Caco-2 (cell line): ENCODE measurements at regions of chr5 and their contacts with region 1.

Region 1: DNA sequence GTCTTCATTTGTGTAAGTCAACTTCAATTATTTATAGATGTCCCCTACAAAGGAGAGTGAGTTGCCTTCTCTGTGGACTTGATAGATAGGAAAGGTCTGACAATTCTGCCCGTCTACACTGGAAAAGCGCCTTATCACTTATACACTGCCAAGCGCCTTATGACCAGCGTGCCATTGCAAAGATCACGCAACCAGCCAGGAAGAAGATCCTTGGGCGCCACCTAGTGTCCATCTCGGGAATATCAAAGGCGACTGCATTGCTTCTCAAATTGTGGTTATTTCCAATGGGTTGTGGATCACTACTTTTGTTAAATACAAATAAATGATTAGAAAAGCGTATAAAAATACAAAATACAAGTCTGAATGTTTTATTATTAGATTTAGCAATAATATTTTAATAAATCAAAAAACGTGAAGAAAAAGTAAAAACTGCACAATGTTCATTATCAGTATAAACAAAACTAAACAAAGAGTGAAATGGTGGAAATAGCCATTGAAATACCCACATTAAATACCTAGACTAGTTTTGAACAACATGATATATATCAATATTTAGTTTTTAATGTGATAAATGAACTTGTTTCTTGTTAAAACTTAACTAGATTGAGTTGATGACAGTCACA is 27.8 kb downstream of the SUB1 start:
- DNase-seq: peak; percentile 76 to 85
- H3K4me3 ChIP-seq: no peak overlapping the region
- H3K4me3 Mint-ChIP-seq: no peak overlapping the region
- H3K27ac Mint-ChIP-seq: no peak overlapping the region
- H3K4me1 ChIP-seq: no peaks in the 10 kb centered on the region
- H3K4me1 Mint-ChIP-seq: no peaks in the 10 kb centered on the region
- H3K27me3 ChIP-seq: no peaks in the 10 kb centered on the region
- H3K27me3 Mint-ChIP-seq: no peaks in the 10 kb centered on the region
- CTCF ChIP-seq: peak; percentile 86 to 93

Region 2: DNA sequence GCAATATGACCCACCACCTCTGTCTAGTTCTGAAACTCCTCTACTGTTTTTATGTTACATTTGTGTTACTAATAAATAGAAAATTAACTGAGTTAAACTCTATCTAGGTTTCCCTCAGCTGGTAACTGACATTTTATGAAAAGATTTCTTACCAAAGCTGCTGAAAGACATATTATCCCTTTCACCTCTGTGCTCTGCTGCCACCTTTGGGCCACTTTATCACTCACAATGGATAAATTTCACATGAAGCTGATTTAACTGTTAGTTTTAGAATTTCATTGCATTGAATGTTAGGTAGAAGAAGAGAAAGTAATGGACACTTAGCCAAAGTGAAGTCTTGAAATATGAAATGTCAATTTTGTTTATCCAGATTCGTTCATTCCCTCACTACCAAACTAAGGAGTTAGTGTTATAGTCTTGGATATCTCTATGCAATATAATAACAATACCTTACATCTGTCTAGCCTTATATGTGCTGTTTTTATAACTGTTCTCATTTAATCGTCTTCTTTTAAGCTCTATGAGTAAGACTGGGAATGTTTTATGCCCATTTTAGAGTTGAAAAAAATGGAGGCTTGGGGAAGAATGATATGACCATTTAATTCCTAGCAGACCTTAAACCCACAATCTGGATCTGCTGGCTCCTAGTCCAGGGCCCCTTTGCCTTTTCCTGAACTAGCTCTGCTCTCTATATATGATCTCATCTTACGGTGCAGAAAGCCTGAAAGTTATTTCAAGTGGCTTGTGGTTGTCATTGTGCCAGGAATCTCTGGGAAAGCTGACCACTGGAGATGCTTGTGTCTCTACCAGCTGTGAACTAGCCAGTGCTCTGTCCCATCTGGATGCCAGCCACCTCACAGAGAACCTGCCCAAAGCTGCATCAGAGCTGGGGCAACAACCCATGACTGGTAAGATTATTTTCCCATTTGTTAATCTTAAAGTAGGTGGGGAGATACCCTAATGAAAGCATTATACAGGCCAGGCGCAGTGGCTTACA is 536.2 kb before region 1 on chr5:
- CTCF ChIA-PET with region 1: no interaction called
- POLR2A ChIA-PET with region 1: no interaction called
- intact Hi-C with region 1: loop called (anchors 10 kb)
- DNase-seq: peak in 1 of 2 experiments; percentile 49
- H3K4me3 ChIP-seq: no peak overlapping the region
- H3K4me3 Mint-ChIP-seq: no peak overlapping the region
- H3K27ac Mint-ChIP-seq: no peak overlapping the region
- H3K4me1 ChIP-seq: no peaks in the 10 kb centered on the region
- H3K4me1 Mint-ChIP-seq: no peaks in the 10 kb centered on the region
- H3K27me3 ChIP-seq: no peaks in the 10 kb centered on the region
- H3K27me3 Mint-ChIP-seq: no peaks in the 10 kb centered on the region
- CTCF ChIP-seq: peak; percentile 74 to 75

Region 3: DNA sequence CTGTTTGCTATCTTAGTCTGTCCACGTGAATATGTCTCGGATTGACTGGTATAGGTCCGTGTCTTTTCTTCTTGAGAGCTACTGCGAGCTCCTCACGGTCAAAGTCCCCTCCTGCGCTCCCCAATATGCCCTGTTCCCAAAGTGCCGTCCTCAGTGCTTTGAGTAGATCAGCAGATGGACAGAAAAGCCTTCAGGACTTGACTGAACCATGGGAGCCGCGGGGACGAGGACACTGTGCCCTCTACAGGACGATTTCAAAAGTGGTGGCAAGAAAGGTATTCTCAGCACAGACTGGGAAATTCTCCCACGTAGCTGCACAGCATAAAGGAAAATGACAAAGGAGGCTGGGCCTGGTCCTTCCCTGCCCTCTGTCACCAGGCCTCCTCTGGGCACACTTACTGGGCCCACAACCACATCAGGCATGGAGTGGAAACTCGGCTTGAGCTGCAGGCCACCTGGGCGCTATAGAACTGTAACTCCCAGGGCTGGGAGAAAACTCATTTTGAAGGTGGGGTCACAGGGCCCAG is 283.8 kb before region 1 on chr5:
- CTCF ChIA-PET with region 1: no interaction called
- POLR2A ChIA-PET with region 1: no interaction called
- intact Hi-C with region 1: loop called (anchors 5 kb)
- DNase-seq: peak; percentile 61 to 68
- H3K4me3 ChIP-seq: no peak overlapping the region
- H3K4me3 Mint-ChIP-seq: no peak overlapping the region
- H3K27ac Mint-ChIP-seq: no peak overlapping the region
- H3K4me1 ChIP-seq: peaks cover 10% of the 10 kb centered on the region; the same call in 1 of the 2 replicates
- H3K4me1 Mint-ChIP-seq: peaks cover 16% of the 10 kb centered on the region
- H3K27me3 ChIP-seq: no peaks in the 10 kb centered on the region
- H3K27me3 Mint-ChIP-seq: no peaks in the 10 kb centered on the region
- CTCF ChIP-seq: peak; percentile 63 to 67

Region 4: DNA sequence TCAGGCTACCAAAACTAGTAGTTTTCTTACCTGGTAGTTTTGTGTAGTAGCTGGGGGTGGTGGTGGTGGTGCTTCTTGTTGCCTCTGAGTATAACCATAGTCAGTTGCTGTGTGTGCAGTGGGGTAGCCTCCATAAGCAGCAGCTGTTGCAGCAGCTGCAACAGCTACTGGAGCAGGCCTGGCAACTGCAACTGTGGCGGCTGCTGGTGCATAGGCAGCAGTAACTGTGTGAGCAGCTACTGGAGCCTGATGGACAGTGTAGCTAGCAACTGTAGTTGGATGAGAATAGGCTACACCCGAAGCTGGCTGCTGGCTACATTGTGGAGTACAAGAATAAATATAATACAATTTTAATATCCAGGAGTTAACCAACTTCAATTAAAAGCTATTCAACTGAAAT is 193.4 kb before region 1 on chr5:
- CTCF ChIA-PET with region 1: no interaction called
- POLR2A ChIA-PET with region 1: no interaction called
- intact Hi-C with region 1: loop called (anchors 1 kb)
- DNase-seq: no peak
- H3K4me3 ChIP-seq: no peak overlapping the region
- H3K4me3 Mint-ChIP-seq: no peak overlapping the region
- H3K27ac Mint-ChIP-seq: no peak overlapping the region
- H3K4me1 ChIP-seq: no peaks in the 10 kb centered on the region
- H3K4me1 Mint-ChIP-seq: peaks cover 11% of the 10 kb centered on the region
- H3K27me3 ChIP-seq: no peaks in the 10 kb centered on the region
- H3K27me3 Mint-ChIP-seq: no peaks in the 10 kb centered on the region
- CTCF ChIP-seq: no peak

Region 5: GRCh38 chr5:32489791-32490582 is 123.2 kb before region 1 on chr5:
- CTCF ChIA-PET with region 1: interaction called, 8 read pairs
- POLR2A ChIA-PET with region 1: no interaction called
- intact Hi-C with region 1: loop called (anchors 1 kb)
- DNase-seq: peak; percentile 72 to 78
- H3K4me3 ChIP-seq: no peak overlapping the region
- H3K4me3 Mint-ChIP-seq: no peak overlapping the region
- H3K27ac Mint-ChIP-seq: peak overlapping the region; percentile 76
- H3K4me1 ChIP-seq: peaks cover 11% of the 10 kb centered on the region
- H3K4me1 Mint-ChIP-seq: peaks cover 19% of the 10 kb centered on the region
- H3K27me3 ChIP-seq: no peaks in the 10 kb centered on the region
- H3K27me3 Mint-ChIP-seq: no peaks in the 10 kb centered on the region
- CTCF ChIP-seq: peak; percentile 75 to 87